Activated naive CD4-positive, alpha-beta T cell treated with anti-CD3 and anti-CD28 coated beads for 36 hours (primary cell): ENCODE measurements at regions of chrX and their contacts with region 1.

Region 1: GRCh38 chrX:13646154-13646549 is 6.8 kb upstream of the TCEANC start:
- DNase-seq: peak; percentile 73
- H3K4me3 Mint-ChIP-seq: no peak overlapping the region
- H3K27ac Mint-ChIP-seq: peak overlapping the region; percentile 18
- H3K4me1 Mint-ChIP-seq: peaks cover 12% of the 10 kb centered on the region
- H3K27me3 Mint-ChIP-seq: no peaks in the 10 kb centered on the region

Region 2: GRCh38 chrX:13506574-13506973 is 139.6 kb before region 1 on chrX:
- CTCF ChIA-PET with region 1: interaction called, 43 read pairs
- intact Hi-C with region 1: loop called (anchors 1 kb)
- DNase-seq: peak; percentile 61
- H3K4me3 Mint-ChIP-seq: no peak overlapping the region
- H3K27ac Mint-ChIP-seq: no peak overlapping the region
- H3K4me1 Mint-ChIP-seq: peaks cover 7% of the 10 kb centered on the region
- H3K27me3 Mint-ChIP-seq: no peaks in the 10 kb centered on the region

Region 3: DNA sequence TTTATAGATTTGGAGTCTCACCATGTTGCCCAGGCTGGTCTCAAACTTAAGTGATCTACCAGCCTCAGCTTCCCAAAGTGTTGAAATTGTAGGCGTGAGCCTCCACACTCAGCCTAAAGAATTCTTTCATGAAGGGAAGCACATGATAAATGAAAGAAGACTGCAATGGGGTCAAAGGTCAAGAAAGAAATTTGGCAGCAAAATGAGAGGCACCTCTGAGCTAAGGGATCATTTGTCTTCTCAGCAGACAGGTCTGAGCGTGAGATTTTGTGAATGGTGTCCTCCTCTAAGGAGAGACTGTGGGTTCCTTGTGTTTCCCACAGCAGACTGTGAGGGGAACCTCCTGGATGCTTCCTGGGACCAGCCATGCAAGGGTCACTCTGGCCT is 134.2 kb before region 1 on chrX:
- CTCF ChIA-PET with region 1: interaction called, 43 read pairs
- intact Hi-C with region 1: no loop called
- DNase-seq: no peak
- H3K4me3 Mint-ChIP-seq: no peak overlapping the region
- H3K27ac Mint-ChIP-seq: no peak overlapping the region
- H3K4me1 Mint-ChIP-seq: no peaks in the 10 kb centered on the region
- H3K27me3 Mint-ChIP-seq: no peaks in the 10 kb centered on the region

Region 4: DNA sequence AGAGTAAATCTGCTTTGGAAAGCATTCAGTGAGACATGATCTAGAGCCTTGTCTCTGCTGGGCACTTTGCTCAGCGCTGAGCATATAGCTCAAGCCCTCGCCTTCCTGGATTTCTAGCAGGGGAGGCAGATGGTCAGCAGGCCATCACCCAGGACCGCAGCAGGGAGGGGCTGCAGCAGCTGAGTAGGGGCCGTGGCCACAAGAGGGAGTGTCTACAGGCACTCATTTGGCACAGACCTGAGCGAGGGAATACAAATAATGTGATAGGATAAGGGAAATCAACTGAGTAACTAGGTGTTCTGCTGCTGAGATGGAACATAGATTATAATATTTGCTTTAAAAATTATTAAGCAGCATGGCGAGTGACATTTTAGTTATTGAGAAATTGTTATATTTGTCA is 118.6 kb after region 1 on chrX:
- CTCF ChIA-PET with region 1: no interaction called
- intact Hi-C with region 1: no loop called
- DNase-seq: no peak
- H3K4me3 Mint-ChIP-seq: no peak overlapping the region
- H3K27ac Mint-ChIP-seq: no peak overlapping the region
- H3K4me1 Mint-ChIP-seq: peaks cover 4% of the 10 kb centered on the region
- H3K27me3 Mint-ChIP-seq: no peaks in the 10 kb centered on the region